ENCODE measurements at regions of chrX and their contacts with region 1.

Region 1: DNA sequence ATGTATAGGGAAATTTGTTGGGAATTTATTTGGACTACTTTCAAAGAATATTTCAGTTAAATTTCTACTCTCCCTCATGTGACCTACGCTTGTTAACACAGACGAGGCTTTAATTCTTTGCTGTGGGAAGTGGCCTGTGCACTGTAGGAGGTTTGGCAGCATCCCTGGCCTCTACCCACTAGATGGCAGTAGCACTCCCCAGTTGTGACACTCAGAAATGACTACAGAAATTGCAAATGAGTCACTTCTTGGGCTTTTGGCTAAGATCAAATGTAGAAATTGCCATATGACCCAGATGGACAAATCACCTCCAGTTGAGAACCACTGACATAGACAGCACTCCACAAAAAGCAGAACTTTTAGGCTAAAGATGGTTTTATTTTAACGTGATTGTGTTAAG is 22.1 kb downstream of the PIR start:
- DNase-seq: peak; percentile 32
- ATAC-seq: peak; percentile 81
- H3K4me3 ChIP-seq: no peak overlapping the region
- H3K27ac ChIP-seq: no peak overlapping the region
- H3K4me1 ChIP-seq: no peaks in the 10 kb centered on the region
- H3K27me3 ChIP-seq: no peaks in the 10 kb centered on the region
- CTCF ChIP-seq: peak; percentile 72
- EP300 ChIP-seq: no peak
- POLR2A ChIP-seq: no peak
- RAD21 ChIP-seq: 0 out of 2 replicates have a peak, but pooled peaks have one; percentile 27

Region 2: DNA sequence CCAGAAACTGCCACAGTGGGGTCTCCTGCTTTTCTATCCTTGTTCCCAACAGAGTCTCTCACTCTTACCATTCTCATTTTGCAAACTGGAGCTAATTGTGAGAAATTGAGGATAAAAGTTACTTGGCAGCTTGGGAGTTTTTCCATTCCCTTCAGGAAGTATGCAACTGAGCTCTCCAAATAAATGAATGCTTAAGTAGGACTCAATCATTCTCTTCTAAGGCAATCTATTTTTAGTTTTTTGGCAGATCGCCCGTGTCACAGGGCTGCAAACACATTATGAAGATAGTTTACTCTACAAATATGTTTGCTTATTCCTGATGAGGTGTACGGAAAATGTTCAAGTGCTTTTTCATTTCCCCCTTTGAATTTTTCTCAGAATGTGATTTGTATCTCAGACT is 160.9 kb before region 1 on chrX:
- CTCF ChIA-PET with region 1: no interaction called
- POLR2A ChIA-PET with region 1: no interaction called
- in situ Hi-C with region 1: no loop called
- intact Hi-C with region 1: no loop called
- DNase-seq: no peak
- ATAC-seq: no peak
- H3K4me3 ChIP-seq: no peak overlapping the region
- H3K27ac ChIP-seq: no peak overlapping the region
- H3K4me1 ChIP-seq: no peaks in the 10 kb centered on the region
- H3K27me3 ChIP-seq: no peaks in the 10 kb centered on the region
- CTCF ChIP-seq: no peak
- EP300 ChIP-seq: no peak
- POLR2A ChIP-seq: no peak
- RAD21 ChIP-seq: no peak

Region 3: DNA sequence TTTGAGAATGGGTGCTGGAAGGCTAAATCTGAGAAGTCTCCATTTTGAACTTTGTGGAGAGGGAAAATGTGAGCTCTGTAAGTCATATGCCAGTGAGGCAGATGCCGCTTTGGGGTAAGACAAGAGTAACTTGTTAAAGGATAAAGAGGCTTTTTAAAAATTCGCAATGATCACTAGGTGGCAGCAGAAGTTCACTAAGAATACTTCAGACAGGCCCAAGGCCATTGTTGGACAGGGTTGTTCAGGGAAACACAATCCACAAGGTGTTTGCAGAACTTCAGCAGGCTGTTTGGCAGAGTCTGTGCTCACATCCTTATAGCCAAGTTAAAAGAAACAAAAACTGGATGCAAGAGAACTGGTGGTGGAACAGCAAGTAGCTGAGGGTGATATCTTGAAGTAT is 122.0 kb before region 1 on chrX:
- CTCF ChIA-PET with region 1: interaction called, 4 read pairs
- POLR2A ChIA-PET with region 1: no interaction called
- in situ Hi-C with region 1: loop called (anchors 10 kb)
- intact Hi-C with region 1: loop called (anchors 1 kb)
- DNase-seq: peak; percentile 55
- ATAC-seq: peak; percentile 75
- H3K4me3 ChIP-seq: no peak overlapping the region
- H3K27ac ChIP-seq: no peak overlapping the region
- H3K4me1 ChIP-seq: no peaks in the 10 kb centered on the region
- H3K27me3 ChIP-seq: no peaks in the 10 kb centered on the region
- CTCF ChIP-seq: peak; percentile 63
- EP300 ChIP-seq: no peak
- POLR2A ChIP-seq: no peak
- RAD21 ChIP-seq: no peak

Region 4: DNA sequence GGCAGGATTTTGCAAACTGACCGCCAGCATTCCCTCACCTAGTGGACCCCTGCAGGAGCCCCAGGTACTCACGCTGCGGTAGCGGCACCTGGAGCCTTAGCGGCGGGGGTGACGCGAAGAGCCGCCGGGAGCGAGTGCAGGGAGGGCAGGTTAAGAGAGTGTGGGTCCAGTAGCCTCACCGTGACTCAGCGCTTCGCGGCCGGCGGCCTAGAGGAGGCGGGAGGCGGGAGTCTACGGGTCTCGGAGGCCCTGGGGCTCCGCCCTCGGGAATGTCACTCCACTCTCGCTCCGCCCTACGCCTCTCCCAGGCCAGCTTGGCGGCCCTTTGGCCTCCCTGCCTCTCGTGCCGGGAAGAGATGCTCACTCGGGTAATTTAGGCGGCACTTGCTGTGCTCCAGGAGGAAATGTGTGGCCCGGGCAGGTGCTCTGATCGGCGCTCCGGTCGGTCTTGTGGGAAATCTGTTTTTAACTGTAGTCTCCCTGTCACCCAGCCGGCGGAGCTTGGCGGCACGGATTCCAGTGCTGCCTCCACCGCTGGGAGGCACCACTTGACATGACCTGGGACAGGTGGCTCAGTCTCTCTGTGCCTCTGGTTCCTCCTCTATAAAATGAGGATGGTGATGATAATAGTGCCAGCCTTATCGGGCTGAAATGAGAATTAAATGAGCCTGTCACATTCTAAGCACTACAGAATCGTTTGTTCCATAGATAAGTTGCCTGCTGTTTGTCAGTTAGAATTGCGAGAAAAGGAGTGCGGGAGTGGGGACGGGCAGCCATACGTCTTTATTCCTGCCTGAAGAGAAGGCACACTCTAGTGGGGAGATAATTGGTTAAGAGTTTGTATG is 22.3 kb after region 1 on chrX and contains the start of gene PIR:
- CTCF ChIA-PET with region 1: no interaction called
- POLR2A ChIA-PET with region 1: no interaction called
- in situ Hi-C with region 1: no loop called
- intact Hi-C with region 1: loop called (anchors 1 kb)
- DNase-seq: peak; percentile 80
- ATAC-seq: peak; percentile 99
- H3K4me3 ChIP-seq: peak within 1 kb of the TSS; percentile 43 to 73 (median 68); a peak in 5 of 6 replicates
- H3K27ac ChIP-seq: peak within 1 kb of the TSS; percentile 87
- H3K4me1 ChIP-seq: peaks cover 25% of the 10 kb centered on the region
- H3K27me3 ChIP-seq: no peaks in the 10 kb centered on the region
- CTCF ChIP-seq: peak; percentile 68
- EP300 ChIP-seq: peak in 1 of 2 experiments; percentile 43; a peak in 1 of 4 replicates
- POLR2A ChIP-seq: peak; percentile 51 to 65
- RAD21 ChIP-seq: no peak
- total RNA-seq, gene PIR: 38.0 and 53.3 TPM in 2 replicates

Region 5: GRCh38 chrX:15505101-15505500 is 34.1 kb after region 1 on chrX:
- CTCF ChIA-PET with region 1: no interaction called
- POLR2A ChIA-PET with region 1: no interaction called
- in situ Hi-C with region 1: no loop called
- intact Hi-C with region 1: no loop called
- DNase-seq: no peak
- ATAC-seq: no peak
- H3K4me3 ChIP-seq: no peak overlapping the region
- H3K27ac ChIP-seq: no peak overlapping the region
- H3K4me1 ChIP-seq: no peaks in the 10 kb centered on the region
- H3K27me3 ChIP-seq: no peaks in the 10 kb centered on the region
- CTCF ChIP-seq: no peak
- EP300 ChIP-seq: no peak
- POLR2A ChIP-seq: no peak
- RAD21 ChIP-seq: no peak

Region 6: DNA sequence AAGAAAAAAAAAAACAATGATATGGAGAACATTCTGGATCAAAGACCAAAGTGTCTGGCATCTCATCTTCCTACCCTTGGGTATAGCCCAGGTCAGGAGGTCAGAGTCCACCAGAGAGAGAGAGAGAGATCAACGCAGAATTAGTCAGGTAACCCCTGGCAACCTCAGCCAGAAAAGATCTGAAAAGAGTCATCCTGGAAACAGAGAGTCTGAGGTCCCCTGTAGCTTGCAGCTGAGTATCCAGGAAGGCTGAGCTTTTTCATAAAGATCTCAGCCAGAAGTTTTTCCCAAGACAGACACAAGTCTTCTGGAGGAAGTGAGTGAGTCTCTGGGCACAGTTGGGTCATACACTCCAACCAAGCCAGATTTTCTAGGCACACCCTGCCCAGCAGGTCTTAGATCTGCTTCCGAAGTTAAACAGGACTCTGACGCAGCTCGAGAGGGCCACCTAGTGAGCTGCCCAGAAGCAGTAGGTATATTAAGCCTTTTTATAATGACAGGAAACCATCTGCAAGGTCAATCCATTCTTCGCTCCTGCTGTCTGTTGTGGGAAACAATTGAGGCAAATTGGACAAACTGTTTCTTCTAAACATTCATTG is 94.1 kb after region 1 on chrX:
- CTCF ChIA-PET with region 1: interaction called, 14 read pairs
- POLR2A ChIA-PET with region 1: no interaction called
- in situ Hi-C with region 1: no loop called
- intact Hi-C with region 1: loop called (anchors 1 kb)
- DNase-seq: peak; percentile 20
- ATAC-seq: peak; percentile 92
- H3K4me3 ChIP-seq: no peak overlapping the region
- H3K27ac ChIP-seq: no peak overlapping the region
- H3K4me1 ChIP-seq: peaks cover 11% of the 10 kb centered on the region
- H3K27me3 ChIP-seq: no peaks in the 10 kb centered on the region
- CTCF ChIP-seq: peak; percentile 75
- EP300 ChIP-seq: no peak
- POLR2A ChIP-seq: no peak
- RAD21 ChIP-seq: peak; percentile 44; the same call in 1 of the 2 replicates

Region 7: DNA sequence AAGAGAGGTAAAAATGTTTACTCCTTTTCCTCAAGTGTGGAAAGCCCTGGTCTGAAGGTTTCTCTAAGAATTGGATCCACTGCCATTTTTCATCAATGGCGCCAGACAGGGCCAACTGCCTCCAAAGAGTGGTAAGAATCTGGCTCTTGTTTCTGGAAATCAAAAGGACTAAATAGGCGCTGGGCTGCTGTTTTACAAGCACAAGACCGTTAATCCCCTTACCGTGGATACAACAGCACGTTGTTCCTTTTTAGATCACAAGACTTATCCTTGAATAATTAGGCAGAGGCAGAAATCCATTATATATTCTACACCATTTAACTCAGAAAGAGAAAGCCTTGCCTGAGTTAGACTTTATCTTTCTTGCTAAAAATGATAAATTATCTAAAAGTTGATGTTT is 182.9 kb after region 1 on chrX:
- CTCF ChIA-PET with region 1: no interaction called
- POLR2A ChIA-PET with region 1: no interaction called
- in situ Hi-C with region 1: no loop called
- intact Hi-C with region 1: loop called (anchors 5 kb)
- DNase-seq: no peak
- ATAC-seq: no peak
- H3K4me3 ChIP-seq: no peak overlapping the region
- H3K27ac ChIP-seq: no peak overlapping the region
- H3K4me1 ChIP-seq: no peaks in the 10 kb centered on the region
- H3K27me3 ChIP-seq: no peaks in the 10 kb centered on the region
- CTCF ChIP-seq: no peak
- EP300 ChIP-seq: no peak
- POLR2A ChIP-seq: no peak
- RAD21 ChIP-seq: no peak

Region 8: GRCh38 chrX:15674841-15675489 is 203.9 kb after region 1 on chrX:
- CTCF ChIA-PET with region 1: no interaction called
- POLR2A ChIA-PET with region 1: no interaction called
- in situ Hi-C with region 1: no loop called
- intact Hi-C with region 1: loop called (anchors 1 kb)
- DNase-seq: peak; percentile 91
- ATAC-seq: peak; percentile 94
- H3K4me3 ChIP-seq: peak overlapping the region; percentile 75 to 94 (median 86)
- H3K27ac ChIP-seq: peak overlapping the region; percentile 94
- H3K4me1 ChIP-seq: peaks cover 26% of the 10 kb centered on the region
- H3K27me3 ChIP-seq: no peaks in the 10 kb centered on the region; a peak in 1 of 5 replicates
- CTCF ChIP-seq: no peak
- EP300 ChIP-seq: no peak
- POLR2A ChIP-seq: peak in 1 of 2 experiments; percentile 52; a peak in 3 of 4 replicates
- RAD21 ChIP-seq: no peak

Region 9: DNA sequence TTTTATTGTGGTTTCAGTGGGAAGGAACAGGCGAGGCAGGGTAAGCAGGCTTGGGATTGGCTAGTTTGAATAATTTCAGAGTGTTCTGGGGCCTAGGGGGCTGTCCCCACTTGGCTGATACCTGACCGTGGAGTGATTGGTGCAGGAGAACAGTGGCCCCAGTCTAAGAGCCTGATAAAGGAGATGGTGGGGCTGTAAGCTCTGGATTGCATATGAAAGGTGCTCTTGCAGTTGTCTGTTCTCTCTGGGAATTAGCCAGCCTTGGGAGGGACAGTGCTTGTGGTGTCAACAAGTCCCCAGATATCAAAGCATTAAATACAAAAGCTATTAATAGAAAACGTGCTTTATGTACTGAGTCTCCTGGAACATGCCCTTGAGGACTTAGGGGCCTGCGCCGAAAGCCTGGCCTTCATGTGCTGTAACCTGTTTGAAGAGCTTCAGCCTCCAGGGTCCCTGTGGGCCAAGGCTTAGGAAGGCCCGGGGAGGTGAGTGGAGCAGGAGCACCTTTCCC is 224.0 kb after region 1 on chrX:
- CTCF ChIA-PET with region 1: no interaction called
- POLR2A ChIA-PET with region 1: no interaction called
- in situ Hi-C with region 1: no loop called
- intact Hi-C with region 1: no loop called
- DNase-seq: no peak
- ATAC-seq: no peak
- H3K4me3 ChIP-seq: no peak overlapping the region
- H3K27ac ChIP-seq: no peak overlapping the region
- H3K4me1 ChIP-seq: no peaks in the 10 kb centered on the region
- H3K27me3 ChIP-seq: no peaks in the 10 kb centered on the region
- CTCF ChIP-seq: no peak
- EP300 ChIP-seq: no peak
- POLR2A ChIP-seq: no peak
- RAD21 ChIP-seq: no peak

Region 10: DNA sequence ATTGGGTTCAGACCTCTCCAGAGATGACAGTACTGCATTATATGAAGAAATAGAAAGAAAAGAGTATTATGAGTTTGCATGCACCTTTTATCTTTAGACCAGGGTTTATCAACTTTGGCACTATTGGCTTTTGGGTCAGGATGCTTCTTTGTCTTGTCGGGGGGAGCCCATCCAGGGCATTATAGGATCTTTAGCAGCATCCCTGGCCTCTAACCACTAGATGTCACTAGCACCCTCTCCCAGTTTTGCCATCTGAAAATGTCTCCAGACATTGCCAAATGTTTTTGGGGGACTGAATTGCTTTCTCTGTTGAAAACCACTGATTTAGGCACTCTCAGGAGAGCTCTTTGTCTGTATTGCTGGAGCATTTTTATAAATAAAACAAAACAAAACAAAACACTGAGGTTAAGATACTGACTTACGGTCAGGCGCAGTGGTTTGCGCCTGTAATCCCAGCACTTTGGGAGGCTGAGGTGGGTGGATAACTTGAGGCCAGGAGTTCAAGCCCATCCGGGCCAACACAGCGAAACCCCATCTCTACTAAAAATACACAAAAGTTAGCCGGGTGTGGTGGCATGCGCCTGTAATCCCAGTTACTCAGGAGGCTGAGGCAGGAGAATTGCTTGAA is 290.7 kb after region 1 on chrX:
- CTCF ChIA-PET with region 1: no interaction called
- POLR2A ChIA-PET with region 1: no interaction called
- in situ Hi-C with region 1: no loop called
- intact Hi-C with region 1: no loop called
- DNase-seq: no peak
- ATAC-seq: peak; percentile 44; the same call in 1 of the 3 replicates
- H3K4me3 ChIP-seq: no peak overlapping the region
- H3K27ac ChIP-seq: no peak overlapping the region
- H3K4me1 ChIP-seq: no peaks in the 10 kb centered on the region
- H3K27me3 ChIP-seq: no peaks in the 10 kb centered on the region
- CTCF ChIP-seq: peak; percentile 49
- EP300 ChIP-seq: no peak
- POLR2A ChIP-seq: no peak
- RAD21 ChIP-seq: no peak